Common myeloid progenitor, CD34-positive (primary cell): ENCODE measurements at regions of chr1 and their contacts with region 1.

Region 1: GRCh38 chr1:212749821-212750535 is 41.6 kb downstream of the NSL1 start:
- DNase-seq: peak; percentile 32 to 40 (median 32)
- H3K4me3 ChIP-seq: no peak overlapping the region
- H3K27ac ChIP-seq: no peak overlapping the region
- H3K4me1 ChIP-seq: peaks cover 17 to 30% (median 25%) of the 10 kb centered on the region in 4 experiments
- H3K27me3 ChIP-seq: no peaks in the 10 kb centered on the region

Region 2: GRCh38 chr1:212477014-212477679 is 272.8 kb before region 1 on chr1:
- CTCF ChIA-PET with region 1: interaction called, 20 read pairs
- POLR2A ChIA-PET with region 1: no interaction called
- DNase-seq: peak; percentile 85 to 92 (median 88)
- H3K4me3 ChIP-seq: no peak overlapping the region
- H3K27ac ChIP-seq: no peak overlapping the region
- H3K4me1 ChIP-seq: peaks cover 0 to 7% (median 0%) of the 10 kb centered on the region in 4 experiments
- H3K27me3 ChIP-seq: no peaks in the 10 kb centered on the region

Region 3: DNA sequence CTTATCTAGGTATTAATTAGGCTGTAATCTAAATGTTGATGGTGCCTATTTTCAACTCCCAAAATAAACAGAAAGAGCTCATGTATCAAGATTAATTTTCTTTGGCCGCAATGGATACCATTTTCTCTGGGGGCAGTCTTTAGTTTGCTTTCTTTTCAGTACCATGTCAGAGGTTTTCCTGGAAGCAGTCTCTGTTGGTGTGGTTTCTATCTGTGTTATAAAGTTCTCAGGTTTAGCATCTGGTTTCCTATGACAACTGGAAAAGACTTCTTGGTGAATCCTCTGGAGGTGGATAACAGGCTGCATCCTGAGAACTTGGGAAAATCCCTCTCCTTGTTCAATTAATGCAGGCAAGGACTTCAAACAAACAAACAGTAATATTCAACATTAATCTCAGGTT is 11.6 kb before region 1 on chr1:
- CTCF ChIA-PET with region 1: interaction called, 10 read pairs
- POLR2A ChIA-PET with region 1: no interaction called
- DNase-seq: no peak
- H3K4me3 ChIP-seq: no peak overlapping the region
- H3K27ac ChIP-seq: no peak overlapping the region
- H3K4me1 ChIP-seq: peaks cover 0 to 1% (median 0%) of the 10 kb centered on the region in 4 experiments
- H3K27me3 ChIP-seq: no peaks in the 10 kb centered on the region

Region 4: GRCh38 chr1:212762235-212762634 is 12.3 kb after region 1 on chr1:
- CTCF ChIA-PET with region 1: interaction called, 24 read pairs
- POLR2A ChIA-PET with region 1: no interaction called
- DNase-seq: no peak
- H3K4me3 ChIP-seq: no peak overlapping the region
- H3K27ac ChIP-seq: no peak overlapping the region
- H3K4me1 ChIP-seq: no peaks in the 10 kb centered on the region
- H3K27me3 ChIP-seq: no peaks in the 10 kb centered on the region

Region 5: DNA sequence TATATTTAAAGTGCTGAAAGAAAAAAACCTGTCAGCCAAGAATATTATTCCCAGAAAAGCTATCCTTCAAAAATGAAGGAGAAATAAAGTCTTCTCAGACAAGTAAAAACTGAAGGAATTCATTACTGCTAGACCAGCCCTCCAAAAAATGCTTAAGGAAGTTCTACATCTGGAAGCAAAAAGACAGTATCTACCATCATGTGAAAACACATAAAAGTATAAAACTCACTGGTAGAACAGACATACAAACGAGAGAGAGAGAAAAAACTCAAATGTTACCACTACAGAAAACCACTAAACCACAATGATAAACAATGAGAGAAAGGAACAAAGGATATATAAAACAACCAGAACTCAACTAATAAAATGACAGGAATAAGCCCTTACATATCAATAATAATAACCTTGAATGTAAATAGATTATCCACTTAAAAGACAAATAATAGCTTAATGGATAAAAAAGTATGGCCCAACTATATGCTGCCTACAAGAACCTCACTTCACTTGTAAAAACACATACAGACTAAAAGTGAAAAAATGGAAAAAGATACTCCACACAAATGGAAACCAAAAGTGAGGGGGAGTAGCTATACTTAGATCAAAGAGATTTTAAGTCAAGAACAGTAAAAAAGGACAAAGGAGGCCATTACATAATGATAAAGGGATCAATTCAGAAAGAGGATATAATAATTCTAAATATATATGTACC is 19.6 kb after region 1 on chr1:
- CTCF ChIA-PET with region 1: interaction called, 24 read pairs
- POLR2A ChIA-PET with region 1: no interaction called
- DNase-seq: peak in 2 of 3 donors; percentile 58 to 65
- H3K4me3 ChIP-seq: no peak overlapping the region
- H3K27ac ChIP-seq: no peak overlapping the region
- H3K4me1 ChIP-seq: peaks cover 0 to 5% (median 3%) of the 10 kb centered on the region in 4 experiments
- H3K27me3 ChIP-seq: no peaks in the 10 kb centered on the region

Region 6: GRCh38 chr1:212782422-212783154 is 32.6 kb after region 1 on chr1:
- CTCF ChIA-PET with region 1: interaction called, 16 read pairs
- POLR2A ChIA-PET with region 1: no interaction called
- DNase-seq: peak; percentile 38 to 59 (median 52)
- H3K4me3 ChIP-seq: no peak overlapping the region
- H3K27ac ChIP-seq: no peak overlapping the region
- H3K4me1 ChIP-seq: no peaks in the 10 kb centered on the region
- H3K27me3 ChIP-seq: no peaks in the 10 kb centered on the region

Region 7: DNA sequence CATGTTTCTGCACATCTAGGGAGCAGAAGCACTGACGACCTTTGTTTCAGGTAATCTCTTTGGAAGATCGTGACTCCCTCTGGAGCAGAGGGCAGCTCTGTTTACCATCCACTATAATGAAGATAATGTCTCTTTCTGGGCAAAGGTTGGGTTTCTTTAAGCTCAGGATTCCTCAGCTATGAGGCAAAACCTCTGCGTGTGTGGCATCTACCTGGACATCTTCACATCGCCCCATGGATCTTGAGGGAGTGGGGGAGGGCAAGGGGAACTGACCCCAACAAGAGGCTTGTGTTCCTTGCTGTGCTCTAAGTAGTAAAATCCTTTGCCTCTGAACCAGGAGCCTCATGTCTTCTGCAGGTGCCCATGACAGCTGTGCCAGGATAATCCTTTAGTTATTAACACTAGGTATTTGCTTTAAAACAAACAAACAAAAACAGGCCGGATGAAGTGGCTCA is 77.9 kb after region 1 on chr1:
- CTCF ChIA-PET with region 1: no interaction called
- POLR2A ChIA-PET with region 1: no interaction called
- DNase-seq: no peak
- H3K4me3 ChIP-seq: no peak overlapping the region
- H3K27ac ChIP-seq: no peak overlapping the region
- H3K4me1 ChIP-seq: peaks cover 0 to 4% (median 3%) of the 10 kb centered on the region in 4 experiments
- H3K27me3 ChIP-seq: no peaks in the 10 kb centered on the region